ENCODE measurements at regions of chr3 and their contacts with region 1.

Region 1: DNA sequence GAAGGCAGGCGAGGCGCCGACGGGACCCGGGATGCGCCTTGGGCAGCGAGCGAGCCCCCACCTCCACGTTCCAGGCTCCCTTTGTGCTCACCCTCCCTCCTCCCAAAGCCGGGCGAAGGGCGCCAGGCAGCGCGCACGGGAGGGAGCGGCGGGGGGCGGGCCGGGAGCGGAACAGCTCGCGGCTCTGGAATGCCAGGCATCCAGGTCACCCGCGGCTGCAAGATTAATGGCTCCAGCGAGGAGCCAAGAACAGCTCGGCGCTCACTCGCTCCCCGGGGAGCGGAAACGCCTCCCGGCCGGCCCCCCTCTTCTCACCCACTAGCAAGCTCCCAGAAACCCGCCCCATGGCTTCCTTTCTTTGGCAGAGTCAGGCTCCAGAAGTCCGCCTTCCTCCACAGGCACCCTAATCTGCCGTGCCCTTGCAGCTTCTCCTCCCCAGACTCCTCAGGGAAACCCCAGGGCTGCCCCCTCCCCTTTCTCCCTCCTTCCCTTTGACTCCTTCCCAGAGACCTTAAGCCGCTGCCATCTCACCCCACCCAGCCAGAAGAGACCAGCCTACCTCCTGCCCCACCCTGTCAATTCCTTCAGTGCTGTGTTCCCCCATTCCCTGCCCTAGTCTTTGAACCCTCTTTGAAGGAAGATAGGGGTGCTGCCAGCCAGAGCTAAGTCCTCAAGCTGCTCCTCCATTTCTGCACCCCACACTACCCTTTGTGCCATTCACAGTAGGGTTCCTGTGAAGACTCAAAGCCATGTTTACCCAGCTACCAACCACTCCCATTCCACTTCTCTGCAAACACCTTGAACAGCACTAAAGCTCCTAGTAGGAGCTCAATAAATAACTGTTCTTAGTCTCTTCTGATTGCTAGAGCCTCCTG is 9.9 kb downstream of the AMOTL2 start:
- DNase-seq: peak; percentile 96 to 99
- H3K4me3 ChIP-seq: peak overlapping the region; percentile 19 to 26
- H3K27ac ChIP-seq: peak overlapping the region; percentile 98 to 99
- H3K4me1 ChIP-seq: peaks cover 4 to 100% (median 96%) of the 10 kb centered on the region in 4 donors
- H3K27me3 ChIP-seq: no peaks in the 10 kb centered on the region
- CTCF ChIP-seq: no peak

Region 2: GRCh38 chr3:133857767-133858166 is 506.5 kb before region 1 on chr3:
- intact Hi-C with region 1: no loop called
- DNase-seq: no peak
- H3K4me3 ChIP-seq: no peak overlapping the region
- H3K27ac ChIP-seq: no peak overlapping the region
- H3K4me1 ChIP-seq: peaks cover 0 to 37% (median 16%) of the 10 kb centered on the region in 4 donors
- H3K27me3 ChIP-seq: no peaks in the 10 kb centered on the region
- CTCF ChIP-seq: no peak

Region 3: DNA sequence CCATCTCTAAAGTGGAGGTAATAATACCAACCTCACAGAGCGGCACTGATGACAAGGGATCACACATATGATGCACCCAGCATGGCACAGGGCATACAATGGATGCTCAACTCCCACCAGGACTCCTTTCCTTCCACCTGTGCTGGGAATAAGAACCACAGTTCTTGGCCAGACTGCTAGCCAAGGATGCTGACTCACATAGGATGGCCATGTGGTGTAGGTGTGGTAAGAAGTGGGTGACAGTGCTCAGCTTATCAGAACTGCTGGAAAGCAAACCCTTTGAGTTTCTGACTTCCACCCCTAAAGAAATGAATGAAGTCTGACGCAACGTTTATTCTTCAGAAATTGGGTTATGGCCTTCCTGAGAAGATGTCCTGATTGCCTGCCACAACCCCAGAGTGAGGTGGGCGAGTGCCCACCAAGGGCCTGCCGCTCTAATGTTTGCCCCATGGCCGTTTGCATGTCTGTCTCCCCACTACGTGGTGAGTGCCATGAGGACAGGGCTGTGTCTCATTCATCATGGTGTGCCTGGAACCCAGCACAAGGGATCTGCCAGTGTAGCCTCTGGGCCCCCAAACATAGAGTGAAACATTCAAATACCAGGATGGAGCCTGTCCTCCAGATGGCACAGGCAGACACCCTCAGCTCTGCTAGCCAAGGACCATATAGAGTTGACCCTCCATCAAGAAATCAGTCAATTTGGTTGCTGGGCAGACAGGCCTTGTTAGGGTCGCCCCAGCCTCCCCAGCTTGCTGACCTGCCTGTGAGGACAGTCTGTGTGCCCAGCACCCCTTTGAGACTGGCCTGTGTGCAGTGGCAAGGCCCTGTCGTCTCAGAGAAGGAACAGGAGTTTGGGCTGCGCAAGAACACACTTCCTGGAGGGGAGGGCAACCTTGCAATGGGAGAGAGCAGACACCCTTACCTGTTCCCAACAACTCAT is 277.0 kb before region 1 on chr3:
- intact Hi-C with region 1: no loop called
- DNase-seq: no peak
- H3K4me3 ChIP-seq: no peak overlapping the region
- H3K27ac ChIP-seq: no peak overlapping the region
- H3K4me1 ChIP-seq: no peaks in the 10 kb centered on the region
- H3K27me3 ChIP-seq: no peaks in the 10 kb centered on the region
- CTCF ChIP-seq: no peak

Region 4: DNA sequence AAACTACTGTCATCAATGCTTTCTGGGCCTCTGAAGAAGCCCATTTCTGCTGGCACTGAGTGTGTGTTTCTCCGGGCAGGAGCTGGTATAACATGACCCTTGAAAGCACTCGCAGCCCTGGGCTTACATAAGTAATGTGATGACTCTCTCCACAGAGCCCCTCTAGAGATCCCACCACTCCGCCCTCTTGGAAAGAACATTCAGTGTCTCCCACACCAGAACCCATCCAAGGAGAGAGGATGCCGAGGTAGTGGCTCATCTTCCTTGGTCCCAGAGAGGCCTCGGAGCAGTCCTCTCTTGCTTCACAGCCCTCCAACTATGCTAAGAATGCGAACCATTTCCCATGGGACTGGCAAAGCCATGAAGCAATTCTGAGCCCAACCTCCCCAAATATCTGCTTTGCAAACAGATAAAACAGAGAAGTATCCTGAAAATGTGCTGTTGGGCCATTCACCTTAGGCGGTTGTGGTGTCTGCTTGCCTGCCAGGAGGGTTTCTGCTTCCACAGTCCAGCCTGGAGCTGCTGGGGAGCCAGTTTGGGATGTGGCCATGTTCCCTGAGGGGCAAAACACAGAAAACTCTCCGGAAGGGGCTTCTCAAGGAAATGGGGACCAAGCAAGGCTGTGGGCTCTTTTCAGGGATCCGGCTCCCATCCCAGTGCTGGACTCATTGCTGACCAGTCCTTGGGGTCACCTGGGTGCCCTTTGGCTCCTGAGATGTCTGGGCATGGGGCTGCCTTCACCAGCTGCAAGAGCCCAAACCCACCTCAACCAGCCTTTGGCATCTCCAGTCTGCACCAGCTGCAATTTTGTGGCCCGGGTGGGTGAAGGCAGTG is 37.3 kb before region 1 on chr3:
- intact Hi-C with region 1: loop called (anchors 5 kb)
- DNase-seq: peak; percentile 76 to 88
- H3K4me3 ChIP-seq: no peak overlapping the region
- H3K27ac ChIP-seq: peak overlapping the region; percentile 90 to 93
- H3K4me1 ChIP-seq: peaks cover 12 to 76% (median 65%) of the 10 kb centered on the region in 4 donors
- H3K27me3 ChIP-seq: no peaks in the 10 kb centered on the region
- CTCF ChIP-seq: no peak

Region 5: DNA sequence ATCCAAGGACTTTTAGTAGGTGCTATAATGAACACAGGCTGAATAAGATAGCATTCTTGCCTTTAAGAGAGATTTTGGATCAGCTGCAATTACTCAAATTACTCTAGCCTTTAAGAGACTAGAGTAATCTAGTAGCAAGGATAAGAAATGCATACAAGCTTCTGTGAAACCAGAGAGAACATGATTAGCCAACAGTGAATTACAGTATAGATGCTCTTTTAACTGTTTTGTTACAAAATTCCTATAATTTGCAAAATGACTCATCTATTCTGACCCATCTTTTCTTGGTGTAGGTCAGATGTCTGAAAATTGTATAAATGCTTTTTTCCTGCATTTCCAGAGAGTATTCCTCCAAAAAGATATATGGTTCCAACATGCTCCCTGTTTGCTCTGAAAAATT is 188.5 kb after region 1 on chr3:
- intact Hi-C with region 1: no loop called
- DNase-seq: no peak
- H3K4me3 ChIP-seq: no peak overlapping the region
- H3K27ac ChIP-seq: no peak overlapping the region
- H3K4me1 ChIP-seq: no peaks in the 10 kb centered on the region
- H3K27me3 ChIP-seq: no peaks in the 10 kb centered on the region
- CTCF ChIP-seq: no peak

Region 6: DNA sequence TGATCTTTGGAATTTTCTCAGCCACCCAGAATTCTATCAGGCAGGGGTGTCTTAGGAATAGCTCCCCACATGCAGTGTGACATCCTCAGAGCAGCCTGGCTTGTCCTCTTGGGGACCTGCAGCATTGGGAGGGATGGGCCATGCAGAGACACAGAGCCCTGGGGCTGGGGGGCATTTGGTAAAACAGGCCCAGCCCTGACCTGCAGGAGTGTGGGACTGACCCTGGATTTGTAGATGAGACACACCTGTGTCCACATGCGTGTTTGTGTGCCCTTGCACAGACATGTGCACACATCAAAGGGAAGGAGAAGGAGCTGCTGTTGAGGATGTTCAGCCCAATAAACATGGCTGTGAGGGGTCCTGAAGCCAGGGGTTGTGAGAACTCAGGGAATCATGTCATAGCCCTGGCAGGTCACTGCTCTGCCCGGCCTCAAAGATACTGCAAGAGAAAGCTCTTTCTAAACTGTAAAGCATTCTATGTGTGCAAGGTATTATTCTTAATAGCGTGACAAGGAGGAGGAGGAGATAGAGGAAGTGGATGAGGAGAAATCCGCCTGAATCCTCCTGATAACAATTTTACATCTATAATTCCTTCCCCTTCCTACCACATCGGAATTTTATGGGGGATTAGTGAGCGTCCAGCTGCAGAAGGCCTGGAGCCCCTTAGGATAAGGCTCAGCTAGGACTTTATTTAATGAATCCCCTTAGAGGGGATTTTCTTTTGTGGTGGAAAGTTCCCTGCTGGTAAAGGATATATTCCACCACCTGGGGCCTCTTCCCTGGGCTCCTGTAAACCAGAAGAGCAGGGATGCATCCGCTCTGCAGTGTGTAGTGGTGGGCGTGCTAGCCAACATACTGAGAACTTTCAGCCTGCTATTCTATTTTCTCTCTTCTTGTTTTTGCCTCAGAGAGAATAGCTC is 676.3 kb after region 1 on chr3:
- intact Hi-C with region 1: no loop called
- DNase-seq: no peak
- H3K4me3 ChIP-seq: no peak overlapping the region
- H3K27ac ChIP-seq: no peak overlapping the region
- H3K4me1 ChIP-seq: no peaks in the 10 kb centered on the region
- H3K27me3 ChIP-seq: no peaks in the 10 kb centered on the region
- CTCF ChIP-seq: no peak

Measured in tibial artery (tissue), 4 donors.